ENCODE measurements at regions of chr1 and their contacts with region 1.

Region 1: GRCh38 chr1:156282479-156283222 is at the start of gene SMG5:
- DNase-seq: peak; percentile 100
- H3K4me3 Mint-ChIP-seq: peak within 1 kb of the TSS; percentile 92
- H3K27ac Mint-ChIP-seq: peak within 1 kb of the TSS; percentile 93
- H3K4me1 Mint-ChIP-seq: peaks cover 38% of the 10 kb centered on the region
- H3K27me3 Mint-ChIP-seq: no peaks in the 10 kb centered on the region
- CTCF ChIP-seq: no peak
- total RNA-seq, gene SMG5: 118 and 140 TPM in 2 replicates

Region 2: DNA sequence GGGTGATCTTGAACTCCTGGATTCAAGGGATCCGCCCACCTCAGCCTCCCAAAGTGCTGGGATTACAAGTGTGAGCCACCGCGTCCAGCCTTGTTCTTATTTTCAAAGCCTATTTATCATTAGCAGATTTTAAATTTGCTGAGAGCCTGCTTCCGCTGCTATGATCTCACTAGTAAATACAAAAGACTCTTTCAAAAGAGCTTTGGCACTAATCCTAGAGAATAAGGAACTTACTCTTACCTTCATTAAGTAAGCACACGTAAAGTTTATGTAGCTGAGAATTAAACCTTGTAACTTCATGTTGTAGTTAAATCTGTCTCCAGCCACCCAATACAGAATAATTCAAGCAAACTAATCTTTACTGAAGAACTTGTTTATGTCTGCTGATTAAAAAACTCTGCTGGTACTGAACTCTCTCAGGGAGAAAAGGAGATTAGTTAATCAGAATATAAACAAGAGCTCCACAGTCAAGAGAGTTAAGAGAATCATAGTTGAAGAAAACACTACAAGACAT is 889.7 kb before region 1 on chr1:
- CTCF ChIA-PET with region 1: no interaction called
- POLR2A ChIA-PET with region 1: no interaction called
- intact Hi-C with region 1: no loop called
- DNase-seq: no peak
- H3K4me3 Mint-ChIP-seq: no peak overlapping the region
- H3K27ac Mint-ChIP-seq: peak overlapping the region; percentile 27
- H3K4me1 Mint-ChIP-seq: no peaks in the 10 kb centered on the region
- H3K27me3 Mint-ChIP-seq: no peaks in the 10 kb centered on the region
- CTCF ChIP-seq: no peak

Region 3: GRCh38 chr1:156123356-156124196 is 159.1 kb before region 1 on chr1:
- CTCF ChIA-PET with region 1: no interaction called
- POLR2A ChIA-PET with region 1: interaction called, 31 read pairs
- intact Hi-C with region 1: no loop called
- DNase-seq: peak; percentile 100
- H3K4me3 Mint-ChIP-seq: peak overlapping the region; percentile 79
- H3K27ac Mint-ChIP-seq: peak overlapping the region; percentile 96
- H3K4me1 Mint-ChIP-seq: peaks cover 85% of the 10 kb centered on the region
- H3K27me3 Mint-ChIP-seq: no peaks in the 10 kb centered on the region
- CTCF ChIP-seq: peak; percentile 34

Region 4: GRCh38 chr1:156262461-156263287 is 20.0 kb before region 1 on chr1:
- CTCF ChIA-PET with region 1: interaction called, 6 read pairs
- POLR2A ChIA-PET with region 1: interaction called, 45 read pairs
- intact Hi-C with region 1: loop called (anchors 1 kb)
- DNase-seq: peak; percentile 90
- H3K4me3 Mint-ChIP-seq: peak overlapping the region; percentile 13
- H3K27ac Mint-ChIP-seq: peak overlapping the region; percentile 92
- H3K4me1 Mint-ChIP-seq: peaks cover 40% of the 10 kb centered on the region
- H3K27me3 Mint-ChIP-seq: no peaks in the 10 kb centered on the region
- CTCF ChIP-seq: no peak

Region 5: DNA sequence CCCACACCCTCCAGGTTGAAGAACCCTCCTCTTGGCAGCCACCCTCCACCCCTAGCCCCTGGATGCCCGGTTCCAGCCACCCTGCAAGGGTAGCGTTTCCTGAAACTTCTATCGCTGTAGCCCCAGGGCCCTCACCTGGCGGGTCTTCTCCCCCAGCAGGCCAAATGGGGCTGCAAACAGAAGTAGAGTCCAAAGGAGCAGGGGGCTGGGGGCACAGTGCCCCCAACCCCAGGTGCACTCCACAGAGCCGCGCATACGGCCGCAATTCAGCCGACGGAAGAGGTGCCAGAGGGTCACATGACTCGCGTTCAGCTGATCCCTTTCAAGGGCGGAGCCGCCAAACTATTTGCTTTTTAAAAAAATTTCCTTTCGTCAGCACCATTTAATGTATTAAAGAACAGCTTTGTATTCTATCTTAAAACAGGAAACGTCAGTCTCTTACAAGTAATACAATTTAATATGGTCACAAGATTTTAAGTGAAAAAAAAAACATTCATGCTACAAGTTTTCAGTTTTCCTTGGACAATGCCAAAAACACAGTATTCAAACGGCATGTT is 12.8 kb after region 1 on chr1 and contains the start of gene GLMP:
- CTCF ChIA-PET with region 1: interaction called, 5 read pairs
- POLR2A ChIA-PET with region 1: interaction called, 210 read pairs
- intact Hi-C with region 1: no loop called
- DNase-seq: peak; percentile 53
- H3K4me3 Mint-ChIP-seq: peak within 1 kb of the TSS; percentile 93
- H3K27ac Mint-ChIP-seq: peak within 1 kb of the TSS; percentile 96
- H3K4me1 Mint-ChIP-seq: peaks cover 19% of the 10 kb centered on the region
- H3K27me3 Mint-ChIP-seq: no peaks in the 10 kb centered on the region
- CTCF ChIP-seq: no peak
- total RNA-seq, gene GLMP: 12.9 and 17.5 TPM in 2 replicates

Region 6: GRCh38 chr1:156319664-156320063 is 37.0 kb after region 1 on chr1:
- CTCF ChIA-PET with region 1: interaction called, 72 read pairs
- POLR2A ChIA-PET with region 1: interaction called, 17 read pairs
- intact Hi-C with region 1: loop called (anchors 5 kb)
- DNase-seq: peak; percentile 51
- H3K4me3 Mint-ChIP-seq: no peak overlapping the region
- H3K27ac Mint-ChIP-seq: no peak overlapping the region
- H3K4me1 Mint-ChIP-seq: peaks cover 5% of the 10 kb centered on the region
- H3K27me3 Mint-ChIP-seq: no peaks in the 10 kb centered on the region
- CTCF ChIP-seq: peak; percentile 58

Region 7: GRCh38 chr1:156480411-156481192 is 198.0 kb after region 1 on chr1:
- CTCF ChIA-PET with region 1: no interaction called
- POLR2A ChIA-PET with region 1: no interaction called
- intact Hi-C with region 1: no loop called
- DNase-seq: peak; percentile 33
- H3K4me3 Mint-ChIP-seq: no peak overlapping the region
- H3K27ac Mint-ChIP-seq: peak overlapping the region; percentile 82
- H3K4me1 Mint-ChIP-seq: peaks cover 31% of the 10 kb centered on the region
- H3K27me3 Mint-ChIP-seq: no peaks in the 10 kb centered on the region
- CTCF ChIP-seq: peak; percentile 53

Measured in MCF 10A (cell line).